Esophagus muscularis mucosa (tissue), 4 donors: ENCODE measurements at regions of chr9 and their contacts with region 1.

Region 1: DNA sequence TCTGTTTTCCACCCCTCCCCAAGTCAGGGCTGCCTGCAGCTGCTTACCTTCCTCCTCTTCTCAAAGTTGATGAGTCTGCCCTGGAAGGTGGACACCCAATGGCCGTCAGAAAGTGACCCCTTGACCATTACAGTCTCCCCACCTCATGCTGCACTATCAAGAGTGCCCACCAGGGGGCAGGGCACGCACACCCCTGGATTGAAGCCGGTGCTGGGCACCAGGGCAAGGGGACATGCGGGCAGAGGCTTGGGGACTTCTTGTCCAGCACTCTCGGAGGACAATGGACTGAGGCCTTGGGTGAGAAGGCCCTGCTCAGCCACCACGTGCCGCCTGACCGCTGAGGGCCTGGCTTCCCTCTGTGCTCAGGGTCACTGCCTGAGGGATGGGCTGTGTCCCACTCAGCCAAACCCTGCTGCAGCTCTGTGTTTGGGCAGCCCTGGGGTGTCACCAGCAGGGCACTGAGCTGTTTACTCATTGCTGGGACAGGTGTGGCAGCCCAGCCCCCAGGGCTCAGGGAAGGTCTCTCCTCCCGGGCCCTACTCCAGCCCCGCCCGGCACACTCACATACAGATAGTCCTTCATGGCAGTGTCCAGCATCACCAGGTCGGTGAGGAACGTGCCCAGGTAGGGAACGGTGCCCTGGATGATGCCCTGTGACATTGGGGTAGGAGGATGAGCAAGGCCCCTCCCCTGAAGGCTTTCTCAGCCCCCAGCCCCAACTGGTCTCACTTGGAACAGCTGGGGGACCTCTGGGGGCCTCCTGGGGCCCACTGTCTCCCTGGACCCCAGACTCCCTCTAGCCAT is 17.7 kb downstream of the RALGDS start:
- DNase-seq: no peak
- H3K4me3 ChIP-seq: no peak overlapping the region
- H3K27ac ChIP-seq: no peak overlapping the region
- H3K4me1 ChIP-seq: peaks cover 0 to 5% (median 2%) of the 10 kb centered on the region in 4 donors
- H3K27me3 ChIP-seq: no peaks in the 10 kb centered on the region
- CTCF ChIP-seq: peak; percentile 96 to 97 (median 97)
- EP300 ChIP-seq: no peak
- POLR2A ChIP-seq: no peak

Region 2: DNA sequence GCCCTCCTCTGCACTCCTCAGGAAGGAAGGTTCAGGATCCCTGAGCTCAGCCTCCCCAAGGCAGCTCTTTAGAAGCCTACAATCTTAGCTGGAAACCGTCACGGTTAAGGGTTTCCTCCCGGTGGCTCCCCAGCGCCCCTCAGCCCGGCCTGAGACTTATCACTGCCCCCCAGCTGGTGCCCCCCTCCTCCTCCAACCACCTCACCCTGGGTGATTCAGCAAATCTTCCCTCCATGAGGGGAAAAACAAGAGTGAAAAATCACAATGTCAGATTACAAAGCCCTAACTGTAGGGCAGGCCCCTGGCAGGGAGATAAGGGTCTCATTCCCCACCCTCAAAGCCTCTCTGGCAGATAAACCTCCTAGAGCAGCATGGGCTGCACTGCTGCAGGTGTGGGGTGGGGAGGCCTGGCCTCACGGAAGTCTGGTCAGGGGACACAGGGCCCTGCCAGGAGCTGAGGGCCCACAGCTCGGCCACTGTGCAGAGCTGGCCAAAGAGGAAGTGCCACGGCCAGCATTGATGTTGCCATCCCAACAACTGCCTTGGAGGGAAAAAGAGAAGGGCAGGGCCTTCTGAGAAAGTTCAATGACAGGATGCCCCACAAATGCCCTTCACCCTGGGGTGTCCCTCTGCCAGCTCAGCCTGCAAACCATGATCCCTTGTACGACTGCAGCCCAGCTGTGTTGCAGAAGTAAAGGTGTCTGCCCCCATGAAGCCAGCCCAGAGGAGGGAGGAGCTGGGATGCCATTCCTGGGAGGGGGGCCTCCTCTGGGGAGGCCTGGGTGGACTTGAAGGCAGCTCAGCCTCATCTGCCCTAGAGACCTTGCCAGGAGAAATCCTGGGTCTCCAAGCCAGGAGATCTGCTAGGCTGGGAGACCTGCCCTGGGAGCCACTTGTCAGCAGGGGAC is 99.0 kb before region 1 on chr9:
- intact Hi-C with region 1: no loop called
- DNase-seq: no peak
- H3K4me3 ChIP-seq: no peak overlapping the region
- H3K27ac ChIP-seq: no peak overlapping the region
- H3K4me1 ChIP-seq: no peaks in the 10 kb centered on the region
- H3K27me3 ChIP-seq: peaks cover 0 to 88% (median 0%) of the 10 kb centered on the region in 4 donors
- CTCF ChIP-seq: no peak
- EP300 ChIP-seq: no peak
- POLR2A ChIP-seq: no peak

Region 3: GRCh38 chr9:133144137-133144903 is 40.9 kb after region 1 on chr9:
- intact Hi-C with region 1: loop called (anchors 1 kb)
- DNase-seq: no peak
- H3K4me3 ChIP-seq: peak overlapping the region; percentile 49 to 64 (median 54)
- H3K27ac ChIP-seq: peak overlapping the region; percentile 51 to 66 (median 56)
- H3K4me1 ChIP-seq: peaks cover 62 to 90% (median 81%) of the 10 kb centered on the region in 4 donors
- H3K27me3 ChIP-seq: no peaks in the 10 kb centered on the region
- CTCF ChIP-seq: peak; percentile 95 to 99 (median 97)
- EP300 ChIP-seq: no peak
- POLR2A ChIP-seq: no peak

Region 4: GRCh38 chr9:133335878-133336811 is 232.8 kb after region 1 on chr9 and contains the start of gene SURF6:
- intact Hi-C with region 1: loop called (anchors 10 kb)
- DNase-seq: peak; percentile 97
- H3K4me3 ChIP-seq: peak within 1 kb of the TSS; percentile 82 to 90 (median 86)
- H3K27ac ChIP-seq: peak within 1 kb of the TSS; percentile 70 to 82 (median 74)
- H3K4me1 ChIP-seq: peaks cover 19 to 41% (median 34%) of the 10 kb centered on the region in 4 donors
- H3K27me3 ChIP-seq: no peaks in the 10 kb centered on the region
- CTCF ChIP-seq: peak in 2 of 3 experiments; percentile 11 to 36
- EP300 ChIP-seq: no peak
- POLR2A ChIP-seq: no peak
- total RNA-seq, gene SURF6: 15.0 to 36.2 (median 27.5) TPM